ENCODE measurements at regions of chr21 and their contacts with region 1.

Region 1: GRCh38 chr21:42524349-42525151 is 10.9 kb downstream of the SLC37A1 start:
- DNase-seq: peak; percentile 86
- ATAC-seq: peak; percentile 82
- H3K4me3 ChIP-seq: peak overlapping the region; percentile 48
- H3K27ac ChIP-seq: peak overlapping the region; percentile 85
- H3K4me1 ChIP-seq: peaks cover 57% of the 10 kb centered on the region
- H3K27me3 ChIP-seq: no peaks in the 10 kb centered on the region
- CTCF ChIP-seq: no peak
- EP300 ChIP-seq: peak; percentile 80 to 81
- POLR2A ChIP-seq: peak; percentile 38; the same call in 1 of the 2 replicates
- RAD21 ChIP-seq: no peak

Region 2: DNA sequence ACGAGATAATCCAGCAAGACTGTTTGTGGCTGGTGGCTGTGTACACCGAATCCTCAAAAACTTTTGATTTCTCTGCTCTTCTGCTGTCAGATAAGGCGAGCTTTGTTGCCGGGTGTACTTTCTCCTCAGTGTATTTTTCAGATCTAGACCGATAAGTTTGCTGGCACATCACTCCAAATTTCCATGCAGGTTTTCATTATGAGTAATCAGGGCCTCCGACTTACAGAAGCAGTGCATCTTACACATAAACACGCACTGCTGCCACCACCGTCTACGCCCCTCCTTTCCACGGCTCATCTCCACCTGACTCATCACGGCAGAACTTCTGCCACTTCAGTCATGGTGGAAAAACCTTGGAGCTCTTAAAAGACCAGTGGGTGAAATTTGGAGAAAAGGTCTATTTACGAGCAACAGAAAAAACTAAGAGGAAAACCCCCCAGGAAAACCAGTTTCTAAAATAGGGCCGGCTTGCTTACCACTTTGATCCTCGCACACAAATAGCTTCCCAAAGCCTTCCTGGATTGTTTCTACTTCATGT is 522.1 kb before region 1 on chr21:
- CTCF ChIA-PET with region 1: no interaction called
- POLR2A ChIA-PET with region 1: no interaction called
- RAD21 ChIA-PET with region 1: no interaction called
- SMC1A ChIA-PET with region 1: no interaction called
- in situ Hi-C with region 1: no loop called
- intact Hi-C with region 1: no loop called
- DNase-seq: peak; percentile 86
- ATAC-seq: peak; percentile 92
- H3K4me3 ChIP-seq: peak overlapping the region; percentile 50
- H3K27ac ChIP-seq: peak overlapping the region; percentile 79
- H3K4me1 ChIP-seq: peaks cover 19% of the 10 kb centered on the region
- H3K27me3 ChIP-seq: no peaks in the 10 kb centered on the region
- CTCF ChIP-seq: no peak
- EP300 ChIP-seq: peak; percentile 80 to 85; a peak in 3 of 4 replicates
- POLR2A ChIP-seq: 0 out of 2 replicates have a peak, but pooled peaks have one; percentile 18
- RAD21 ChIP-seq: no peak

Region 3: DNA sequence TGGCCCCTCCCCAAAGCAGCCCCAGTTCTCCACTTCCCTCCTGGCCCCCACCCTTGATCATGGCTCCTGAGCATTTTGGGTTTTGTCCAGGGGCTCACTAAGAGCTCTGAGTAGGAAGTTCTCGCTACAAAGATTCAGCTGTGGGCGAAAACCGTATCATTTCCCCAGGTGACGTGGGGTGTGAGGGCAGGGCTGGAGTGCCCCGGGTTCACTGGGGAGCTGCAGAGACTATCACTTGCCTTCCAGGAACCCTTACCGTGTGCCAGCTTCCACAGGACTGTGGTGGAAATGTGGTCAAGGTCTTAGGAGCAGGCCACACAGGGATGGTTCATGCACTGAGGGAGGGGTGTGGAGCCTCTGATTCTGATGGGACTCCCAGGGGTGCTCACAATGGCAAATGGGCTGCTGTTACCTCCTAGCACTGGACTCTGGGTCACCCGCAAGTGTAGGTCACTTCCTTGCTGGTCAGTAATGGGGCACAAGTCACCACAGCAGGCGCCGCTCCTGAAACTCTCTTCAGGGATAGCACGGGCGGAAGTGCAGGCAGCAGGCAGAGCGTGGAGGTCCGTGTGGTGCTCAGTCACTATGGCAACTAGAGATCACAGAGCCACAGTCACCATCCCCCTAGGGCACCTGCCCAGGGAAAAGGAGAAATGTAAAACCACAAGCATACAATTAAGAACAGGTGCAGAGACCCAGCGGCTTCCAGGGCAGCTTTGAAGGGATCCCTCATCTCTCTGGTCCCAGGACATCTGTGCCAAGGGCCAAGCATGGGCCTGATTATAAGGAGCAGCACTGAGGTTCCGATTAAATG is 64.0 kb before region 1 on chr21:
- CTCF ChIA-PET with region 1: interaction called, 3 read pairs
- POLR2A ChIA-PET with region 1: interaction called, 9 read pairs
- RAD21 ChIA-PET with region 1: interaction called, 10 read pairs
- SMC1A ChIA-PET with region 1: interaction called, 74 read pairs
- in situ Hi-C with region 1: no loop called
- intact Hi-C with region 1: no loop called
- DNase-seq: peak; percentile 83
- ATAC-seq: peak; percentile 71
- H3K4me3 ChIP-seq: no peak overlapping the region
- H3K27ac ChIP-seq: peak overlapping the region; percentile 60
- H3K4me1 ChIP-seq: peaks cover 52% of the 10 kb centered on the region
- H3K27me3 ChIP-seq: no peaks in the 10 kb centered on the region
- CTCF ChIP-seq: no peak
- EP300 ChIP-seq: peak; percentile 59 to 97; a peak in 3 of 4 replicates
- POLR2A ChIP-seq: no peak
- RAD21 ChIP-seq: no peak

Region 4: GRCh38 chr21:42467140-42467983 is 57.2 kb before region 1 on chr21:
- CTCF ChIA-PET with region 1: interaction called, 48 read pairs
- POLR2A ChIA-PET with region 1: interaction called, 22 read pairs
- RAD21 ChIA-PET with region 1: interaction called, 57 read pairs
- SMC1A ChIA-PET with region 1: interaction called, 74 read pairs
- in situ Hi-C with region 1: no loop called
- intact Hi-C with region 1: no loop called
- DNase-seq: no peak
- ATAC-seq: peak; percentile 42
- H3K4me3 ChIP-seq: no peak overlapping the region
- H3K27ac ChIP-seq: no peak overlapping the region
- H3K4me1 ChIP-seq: peaks cover 60% of the 10 kb centered on the region
- H3K27me3 ChIP-seq: no peaks in the 10 kb centered on the region
- CTCF ChIP-seq: peak; percentile 46 to 56 (median 49); a peak in 5 of 6 replicates
- EP300 ChIP-seq: peak; percentile 34 to 54; a peak in 1 of 4 replicates
- POLR2A ChIP-seq: no peak
- RAD21 ChIP-seq: peak; percentile 56

Region 5: GRCh38 chr21:42474043-42474831 is 50.3 kb before region 1 on chr21:
- CTCF ChIA-PET with region 1: interaction called, 9 read pairs
- POLR2A ChIA-PET with region 1: interaction called, 22 read pairs
- RAD21 ChIA-PET with region 1: interaction called, 58 read pairs
- SMC1A ChIA-PET with region 1: interaction called, 74 read pairs
- in situ Hi-C with region 1: no loop called
- intact Hi-C with region 1: no loop called
- DNase-seq: no peak
- ATAC-seq: peak; percentile 83
- H3K4me3 ChIP-seq: no peak overlapping the region
- H3K27ac ChIP-seq: peak overlapping the region; percentile 20; the same call in 1 of the 2 replicates
- H3K4me1 ChIP-seq: peaks cover 53% of the 10 kb centered on the region
- H3K27me3 ChIP-seq: no peaks in the 10 kb centered on the region
- CTCF ChIP-seq: no peak; a peak in 1 of 6 replicates
- EP300 ChIP-seq: peak; percentile 21 to 71; a peak in 1 of 4 replicates
- POLR2A ChIP-seq: no peak
- RAD21 ChIP-seq: no peak; the same call in 1 of the 2 replicates

Region 6: DNA sequence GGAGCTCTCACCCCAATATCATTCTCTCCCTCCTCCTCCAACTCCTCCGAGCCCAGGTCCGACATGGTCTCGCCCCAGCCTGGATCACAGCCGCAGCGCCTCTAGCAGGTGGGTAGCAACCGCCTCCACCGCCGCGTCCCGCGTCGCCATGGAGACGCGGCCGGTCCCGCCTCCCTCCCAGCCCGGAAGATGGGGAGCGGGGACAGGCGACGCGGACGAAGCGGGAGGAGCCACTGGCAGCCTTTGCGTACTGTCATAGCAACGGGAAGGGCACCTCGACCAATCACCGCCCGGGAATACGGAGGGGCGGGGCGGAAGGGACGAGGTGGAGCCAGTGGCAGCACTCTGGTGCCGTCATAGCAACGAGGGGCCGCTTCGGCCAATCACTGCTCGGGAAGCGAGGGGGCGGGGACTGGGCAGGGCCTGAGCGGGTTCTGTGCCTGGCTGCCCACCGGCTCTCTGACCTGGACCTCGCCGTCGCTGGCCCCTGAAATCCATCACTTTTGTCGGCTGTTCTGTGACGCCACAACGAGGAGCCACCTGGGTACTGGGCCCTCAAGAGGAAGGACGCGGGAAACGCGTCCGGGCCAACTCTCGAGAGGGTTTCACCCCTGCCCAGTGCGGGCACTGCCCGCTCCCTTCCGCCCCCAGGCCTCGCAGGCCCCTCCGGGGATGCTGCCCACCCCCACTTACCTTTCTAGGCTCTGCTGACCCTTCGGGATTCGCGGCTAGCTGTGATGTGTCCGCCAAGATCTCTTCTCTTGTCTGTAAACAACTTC is 28.2 kb before region 1 on chr21 and contains the start of gene RSPH1:
- CTCF ChIA-PET with region 1: no interaction called
- POLR2A ChIA-PET with region 1: interaction called, 3 read pairs
- RAD21 ChIA-PET with region 1: interaction called, 9 read pairs
- SMC1A ChIA-PET with region 1: no interaction called
- in situ Hi-C with region 1: no loop called
- intact Hi-C with region 1: loop called (anchors 1 kb)
- DNase-seq: peak; percentile 96
- ATAC-seq: peak; percentile 99
- H3K4me3 ChIP-seq: peak within 1 kb of the TSS; percentile 80
- H3K27ac ChIP-seq: peak within 1 kb of the TSS; percentile 41
- H3K4me1 ChIP-seq: peaks cover 13% of the 10 kb centered on the region
- H3K27me3 ChIP-seq: no peaks in the 10 kb centered on the region
- CTCF ChIP-seq: no peak; a peak in 1 of 6 replicates
- EP300 ChIP-seq: no peak
- POLR2A ChIP-seq: peak; percentile 69
- RAD21 ChIP-seq: no peak
- polyA plus RNA-seq, gene RSPH1: 0.37 to 0.38 TPM

Region 7: GRCh38 chr21:42505090-42505726 is 19.3 kb before region 1 on chr21:
- CTCF ChIA-PET with region 1: interaction called, 8 read pairs
- POLR2A ChIA-PET with region 1: interaction called, 4 read pairs
- RAD21 ChIA-PET with region 1: no interaction called
- SMC1A ChIA-PET with region 1: interaction called, 15 read pairs
- in situ Hi-C with region 1: no loop called
- intact Hi-C with region 1: no loop called
- DNase-seq: peak; percentile 72
- ATAC-seq: peak; percentile 99
- H3K4me3 ChIP-seq: no peak overlapping the region
- H3K27ac ChIP-seq: no peak overlapping the region
- H3K4me1 ChIP-seq: peaks cover 31% of the 10 kb centered on the region
- H3K27me3 ChIP-seq: no peaks in the 10 kb centered on the region
- CTCF ChIP-seq: no peak
- EP300 ChIP-seq: peak; percentile 58 to 88; a peak in 2 of 4 replicates
- POLR2A ChIP-seq: no peak
- RAD21 ChIP-seq: no peak

Region 8: DNA sequence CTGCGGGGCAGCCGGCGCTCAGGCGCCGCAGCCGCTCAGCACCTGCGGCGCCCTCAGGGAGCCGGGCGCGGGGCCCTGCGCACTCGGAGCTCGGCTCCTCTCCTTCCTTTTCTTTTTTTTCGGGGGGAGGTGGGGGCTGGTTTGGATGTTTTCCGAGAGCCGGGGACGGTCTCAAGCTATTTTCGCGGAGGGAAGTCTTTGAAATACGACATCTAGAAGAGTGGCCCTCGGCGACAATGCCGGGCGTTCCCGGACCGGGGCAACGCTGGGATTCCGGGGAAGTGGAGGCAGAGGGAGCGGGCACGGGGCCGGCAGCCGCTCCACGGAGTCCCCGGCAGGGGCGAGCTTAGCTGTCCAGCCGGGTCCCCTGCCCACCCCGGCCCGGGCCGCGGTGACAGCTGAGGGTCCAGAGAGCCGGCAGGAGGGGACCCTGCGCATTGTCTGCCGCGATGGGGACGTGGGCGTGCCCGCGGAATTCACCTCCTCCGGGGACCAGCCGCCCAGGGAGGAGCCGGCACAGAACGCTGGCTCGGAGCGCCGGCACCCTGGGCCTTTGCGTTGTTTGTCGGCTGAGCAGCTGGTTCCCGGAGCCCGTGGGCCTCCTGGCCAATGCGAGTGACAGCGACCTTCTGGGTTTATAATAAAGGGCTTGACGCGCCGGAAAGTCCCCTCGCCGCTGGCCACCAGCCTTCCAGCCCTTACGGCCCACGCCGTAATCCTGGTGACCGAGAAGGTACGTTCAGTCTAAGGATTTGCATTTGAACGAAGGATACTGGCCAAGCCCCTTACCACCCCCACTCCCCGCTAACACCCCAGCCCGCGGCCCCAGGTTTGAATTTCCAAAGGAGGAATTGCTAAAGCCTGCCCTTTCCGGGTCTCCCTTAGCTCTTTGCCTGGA is 10.3 kb before region 1 on chr21:
- CTCF ChIA-PET with region 1: interaction called, 9 read pairs
- POLR2A ChIA-PET with region 1: interaction called, 82 read pairs
- RAD21 ChIA-PET with region 1: interaction called, 30 read pairs
- SMC1A ChIA-PET with region 1: interaction called, 50 read pairs
- in situ Hi-C with region 1: no loop called
- intact Hi-C with region 1: no loop called
- DNase-seq: no peak
- ATAC-seq: peak; percentile 84
- H3K4me3 ChIP-seq: peak overlapping the region; percentile 94
- H3K27ac ChIP-seq: peak overlapping the region; percentile 41
- H3K4me1 ChIP-seq: peaks cover 11% of the 10 kb centered on the region
- H3K27me3 ChIP-seq: no peaks in the 10 kb centered on the region
- CTCF ChIP-seq: no peak
- EP300 ChIP-seq: no peak; a peak in 1 of 4 replicates
- POLR2A ChIP-seq: peak; percentile 80
- RAD21 ChIP-seq: no peak

Measured in GM12878 (cell line).